Activated naive CD4-positive, alpha-beta T cell treated with anti-CD3 and anti-CD28 coated beads for 36 hours (primary cell): ENCODE measurements at regions of chr2 and their contacts with region 1.

Region 1: DNA sequence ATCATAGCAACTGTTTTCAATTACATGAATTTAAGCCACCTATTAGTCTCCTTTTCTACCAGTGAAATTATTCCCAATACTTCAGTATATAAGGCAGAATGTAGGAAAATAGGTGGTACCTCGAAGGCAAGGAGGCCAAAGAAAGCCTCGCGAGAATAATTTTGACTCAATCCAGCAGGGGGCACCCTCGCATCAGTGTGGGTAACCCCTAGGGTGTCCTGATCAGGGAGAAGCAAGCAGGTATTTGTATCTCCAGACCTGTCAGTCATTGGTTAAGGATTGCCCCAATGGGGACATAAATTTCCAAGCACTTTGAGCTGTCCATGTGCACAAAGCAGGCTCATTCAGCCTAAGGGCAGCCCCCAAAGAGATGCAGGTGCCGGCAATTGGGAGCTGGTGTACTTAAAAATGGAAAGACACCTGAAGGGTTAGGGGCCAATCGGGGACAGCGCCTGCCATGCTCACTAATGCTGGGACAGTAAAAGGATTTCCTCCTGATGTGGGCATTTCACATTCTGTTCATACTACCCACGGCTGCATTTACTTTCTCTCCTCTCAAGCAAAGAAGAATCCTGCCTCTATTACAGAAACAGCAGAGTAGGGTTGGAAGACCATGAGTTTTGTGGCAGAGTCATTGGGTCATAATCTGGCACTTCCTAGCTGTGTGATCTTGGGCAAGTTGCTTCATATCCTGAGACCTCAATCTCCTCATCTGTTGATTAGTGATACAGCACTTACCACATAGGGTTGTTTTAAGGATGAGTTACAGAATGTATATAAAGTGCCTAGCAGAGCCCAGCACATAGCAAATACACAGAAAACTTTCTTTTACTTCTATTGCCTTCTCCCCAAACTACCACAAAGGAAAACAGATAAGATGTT is 136.1 kb downstream of the ICOS start:
- DNase-seq: peak; percentile 92
- H3K4me3 Mint-ChIP-seq: no peak overlapping the region
- H3K27ac Mint-ChIP-seq: no peak overlapping the region
- H3K4me1 Mint-ChIP-seq: peaks cover 10% of the 10 kb centered on the region
- H3K27me3 Mint-ChIP-seq: peaks cover 2% of the 10 kb centered on the region

Region 2: GRCh38 chr2:203122301-203122986 is 950.2 kb before region 1 on chr2:
- CTCF ChIA-PET with region 1: no interaction called
- intact Hi-C with region 1: no loop called
- DNase-seq: no peak
- H3K4me3 Mint-ChIP-seq: no peak overlapping the region
- H3K27ac Mint-ChIP-seq: no peak overlapping the region
- H3K4me1 Mint-ChIP-seq: no peaks in the 10 kb centered on the region
- H3K27me3 Mint-ChIP-seq: no peaks in the 10 kb centered on the region

Region 3: DNA sequence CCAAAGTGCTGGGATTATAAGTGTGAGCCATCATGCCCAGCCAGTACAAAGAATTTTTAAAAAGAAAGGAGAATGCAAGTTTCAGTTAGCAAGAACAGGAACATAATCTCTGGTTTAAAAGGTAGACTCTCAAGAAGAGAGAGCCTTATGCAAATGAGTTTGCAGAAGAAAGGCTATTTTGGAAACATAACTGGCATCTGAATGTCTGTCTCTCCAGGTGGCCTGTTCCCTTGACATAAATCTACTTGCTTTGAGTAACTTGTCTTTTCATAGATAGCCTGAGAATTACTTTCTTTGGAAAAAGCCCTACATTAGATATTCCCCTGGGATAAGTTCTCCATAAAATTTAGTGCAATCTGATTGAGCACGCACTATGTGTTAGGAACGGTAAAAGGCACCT is 26.5 kb before region 1 on chr2:
- CTCF ChIA-PET with region 1: interaction called, 15 read pairs
- intact Hi-C with region 1: no loop called
- DNase-seq: no peak
- H3K4me3 Mint-ChIP-seq: no peak overlapping the region
- H3K27ac Mint-ChIP-seq: no peak overlapping the region
- H3K4me1 Mint-ChIP-seq: peaks cover 38% of the 10 kb centered on the region
- H3K27me3 Mint-ChIP-seq: no peaks in the 10 kb centered on the region

Region 4: DNA sequence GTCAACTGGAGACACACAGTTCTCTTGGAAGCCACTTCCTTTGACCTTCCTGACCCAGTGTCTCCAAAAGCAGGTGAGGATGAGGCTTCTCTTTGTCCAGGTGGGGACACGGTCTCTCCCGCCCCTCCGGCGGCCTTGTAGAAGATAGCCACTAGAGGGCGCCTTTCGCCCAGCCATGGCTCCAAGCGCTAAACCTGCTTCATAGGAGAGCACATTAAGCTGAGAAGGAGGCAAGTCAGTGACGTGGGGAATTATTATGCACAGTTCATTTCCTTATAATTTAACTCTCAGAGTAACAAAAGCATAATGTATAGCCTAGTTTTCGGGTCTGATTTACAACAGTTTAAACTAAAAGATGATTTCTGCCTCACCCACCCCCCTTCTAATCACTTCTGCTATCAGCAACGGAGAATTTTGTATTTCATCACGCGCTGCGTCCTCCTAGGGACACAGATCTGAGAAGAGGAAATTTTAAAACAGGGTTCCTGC is 72.6 kb after region 1 on chr2:
- CTCF ChIA-PET with region 1: interaction called, 12 read pairs
- intact Hi-C with region 1: loop called (anchors 1 kb)
- DNase-seq: peak; percentile 90
- H3K4me3 Mint-ChIP-seq: peak overlapping the region; percentile 65
- H3K27ac Mint-ChIP-seq: peak overlapping the region; percentile 22
- H3K4me1 Mint-ChIP-seq: peaks cover 9% of the 10 kb centered on the region
- H3K27me3 Mint-ChIP-seq: peaks cover 5% of the 10 kb centered on the region

Region 5: GRCh38 chr2:204239411-204240165 is 166.9 kb after region 1 on chr2:
- CTCF ChIA-PET with region 1: interaction called, 3 read pairs
- intact Hi-C with region 1: loop called (anchors 5 kb)
- DNase-seq: no peak
- H3K4me3 Mint-ChIP-seq: no peak overlapping the region
- H3K27ac Mint-ChIP-seq: no peak overlapping the region
- H3K4me1 Mint-ChIP-seq: peaks cover 14% of the 10 kb centered on the region
- H3K27me3 Mint-ChIP-seq: no peaks in the 10 kb centered on the region